AG04449 (cell line): ENCODE measurements at regions of chr18 and their contacts with region 1.

Region 1: DNA sequence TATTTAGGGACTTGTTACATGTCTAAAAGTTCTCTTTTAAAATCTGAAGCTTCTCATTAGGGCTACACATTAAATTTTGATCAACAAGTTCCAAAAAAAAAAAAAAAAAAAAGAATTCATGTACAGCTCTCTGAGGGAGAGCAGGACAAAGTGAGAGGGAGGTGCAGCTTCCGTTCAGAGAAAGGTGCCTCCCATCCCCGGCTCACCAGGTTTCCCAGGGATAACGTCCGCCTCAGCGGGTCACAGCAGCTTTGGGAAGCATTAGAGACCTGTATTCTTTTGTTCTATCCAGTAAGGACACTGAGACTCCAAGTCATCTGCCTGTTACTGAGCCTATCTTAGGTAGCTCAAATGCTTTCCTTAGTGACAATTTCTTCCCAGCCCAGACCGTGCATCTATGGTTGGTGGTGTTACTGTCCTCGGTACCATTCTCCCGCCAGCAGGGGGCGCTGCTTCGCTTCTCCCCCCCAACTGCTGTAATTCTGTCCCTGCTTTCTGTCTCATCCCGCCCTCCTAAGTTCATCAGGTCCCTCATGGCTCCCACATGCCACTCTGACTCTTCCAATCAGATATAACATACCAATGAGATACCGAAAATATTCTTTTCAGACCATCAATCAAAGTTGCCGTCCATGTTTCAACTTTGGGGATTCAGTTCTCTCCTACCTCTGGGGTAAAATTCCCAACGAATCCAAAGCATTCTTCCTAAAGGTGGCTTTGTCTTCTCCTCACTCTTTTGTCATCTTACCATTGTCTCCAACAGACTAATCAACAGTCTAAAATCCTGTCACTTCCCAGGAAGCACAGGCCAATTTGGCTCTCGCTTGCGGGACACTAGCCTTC is 466.5 kb downstream of the METTL4 start:
- DNase-seq: no peak
- H3K4me3 ChIP-seq: no peak overlapping the region
- CTCF ChIP-seq: peak; percentile 80

Region 2: DNA sequence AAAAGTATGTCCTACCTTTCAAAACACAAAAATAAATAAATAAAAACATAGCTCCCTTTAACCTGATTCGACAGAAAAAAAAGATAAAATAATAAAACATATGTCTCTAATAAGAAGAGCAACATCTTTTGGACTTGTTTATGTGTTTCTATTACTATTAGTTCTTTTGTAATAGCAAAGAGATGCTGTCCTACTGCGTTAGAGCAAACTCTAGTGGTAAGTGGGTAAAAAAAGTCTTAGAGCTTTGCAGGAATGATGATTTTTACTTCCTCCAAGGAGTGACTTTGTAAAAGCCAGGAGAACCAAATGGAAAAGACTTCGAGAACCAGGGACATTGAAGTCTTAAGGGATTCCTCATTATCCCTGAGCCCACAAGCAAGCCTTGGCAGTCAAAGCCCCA is 16.4 kb after region 1 on chr18:
- CTCF ChIA-PET with region 1: interaction called, 26 read pairs
- POLR2A ChIA-PET with region 1: no interaction called
- DNase-seq: no peak
- H3K4me3 ChIP-seq: no peak overlapping the region
- CTCF ChIP-seq: no peak

Region 3: DNA sequence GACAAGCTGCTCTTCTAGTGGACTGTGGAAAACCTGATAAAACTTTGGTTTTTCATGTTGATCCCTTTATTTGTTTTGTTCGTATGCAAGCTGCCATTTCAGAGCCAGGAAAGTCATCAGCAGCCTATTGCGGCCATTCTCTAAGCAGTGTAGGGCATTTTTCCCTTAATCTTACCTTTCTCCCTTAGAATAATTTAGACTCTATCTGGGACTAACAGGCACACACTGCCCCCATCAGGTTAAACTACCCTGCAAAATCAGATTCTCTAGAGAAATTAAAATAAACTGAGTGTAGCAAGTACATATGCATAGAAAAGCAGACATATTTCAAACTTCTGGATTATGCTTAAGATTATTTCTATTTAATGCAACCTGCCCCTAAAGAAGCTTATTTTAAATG is 119.0 kb after region 1 on chr18:
- CTCF ChIA-PET with region 1: interaction called, 31 read pairs
- POLR2A ChIA-PET with region 1: no interaction called
- DNase-seq: no peak
- H3K4me3 ChIP-seq: no peak overlapping the region
- CTCF ChIP-seq: peak; percentile 26

Region 4: DNA sequence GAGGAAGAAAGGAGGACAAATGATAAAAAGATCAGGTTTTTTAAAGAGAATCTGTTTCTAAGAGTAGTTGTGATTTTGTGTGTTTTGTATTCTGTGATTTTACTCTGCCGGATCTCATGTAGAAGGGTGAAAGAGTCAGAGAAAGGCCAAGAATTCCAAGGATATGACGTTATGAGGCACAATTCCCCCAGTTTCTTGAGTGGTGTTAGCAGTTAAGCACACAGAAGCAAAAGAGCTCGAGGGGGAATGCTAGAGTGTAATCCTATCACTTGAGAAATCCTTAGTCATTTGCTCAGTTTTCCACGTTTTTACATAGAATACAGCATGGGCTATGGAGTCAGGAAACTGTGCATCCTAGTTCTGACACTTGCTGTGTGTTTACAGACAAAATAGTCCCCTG is 431.7 kb after region 1 on chr18:
- CTCF ChIA-PET with region 1: interaction called, 184 read pairs
- POLR2A ChIA-PET with region 1: no interaction called
- DNase-seq: no peak
- H3K4me3 ChIP-seq: no peak overlapping the region
- CTCF ChIP-seq: no peak